ENCODE measurements at regions of chr4 and their contacts with region 1.

Region 1: GRCh38 chr4:2843263-2843940 is at the start of gene ADD1:
- DNase-seq: peak; percentile 90
- total RNA-seq, gene ADD1: 82.3 and 121 TPM in 2 replicates

Region 2: DNA sequence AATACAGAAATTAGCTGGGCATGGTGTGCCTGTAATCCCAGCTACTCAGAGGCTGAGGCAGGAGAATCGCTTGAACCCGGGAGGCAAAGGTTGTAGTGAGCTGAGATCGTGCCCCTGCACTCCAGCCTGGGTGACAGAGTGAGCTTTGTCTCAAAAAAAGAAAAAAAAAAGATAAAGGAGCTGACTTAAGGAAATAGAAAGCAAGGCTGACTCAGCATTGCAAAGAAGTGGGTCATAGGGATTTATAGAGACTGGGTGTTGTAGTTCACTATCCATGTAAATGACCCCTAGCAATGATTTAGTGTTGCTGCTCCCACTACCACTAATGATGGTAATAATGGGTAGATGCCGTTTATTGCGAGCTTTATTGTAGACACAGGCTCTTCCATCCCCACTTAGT is 47.9 kb after region 1 on chr4:
- in situ Hi-C with region 1: no loop called
- DNase-seq: no peak

Region 3: DNA sequence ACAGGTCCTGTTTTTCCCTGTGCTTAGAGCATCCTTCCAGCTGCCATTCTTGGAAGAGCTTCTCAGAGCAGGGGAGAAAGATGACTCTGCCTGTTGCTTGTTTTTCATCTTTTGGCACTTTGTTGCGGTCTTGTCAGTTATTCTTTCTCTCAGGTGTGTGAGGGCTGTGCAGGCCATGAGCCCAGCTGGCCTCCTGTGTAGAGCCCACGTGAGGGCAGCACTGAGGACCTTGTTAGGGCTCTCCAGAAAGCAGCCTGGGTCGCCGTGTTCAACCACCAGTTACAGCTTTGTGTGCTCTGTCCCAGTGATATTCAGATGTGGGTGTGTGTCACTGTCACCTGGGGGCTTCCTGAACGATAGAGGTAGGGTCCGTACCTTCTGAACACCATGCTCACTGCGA is 67.0 kb after region 1 on chr4:
- in situ Hi-C with region 1: no loop called
- DNase-seq: peak; percentile 47

Region 4: GRCh38 chr4:2934813-2935761 is 91.7 kb after region 1 on chr4:
- in situ Hi-C with region 1: loop called (anchors 5 kb)
- DNase-seq: peak; percentile 86

Measured in G401 (cell line).